ENCODE measurements at regions of chr20 and their contacts with region 1.

Region 1: GRCh38 chr20:44942264-44942973 is 17.8 kb downstream of the TOMM34 start:
- DNase-seq: no peak
- H3K4me3 ChIP-seq: no peak overlapping the region
- H3K27ac ChIP-seq: no peak overlapping the region
- H3K4me1 ChIP-seq: no peaks in the 10 kb centered on the region
- H3K27me3 ChIP-seq: no peaks in the 10 kb centered on the region
- CTCF ChIP-seq: no peak

Region 2: DNA sequence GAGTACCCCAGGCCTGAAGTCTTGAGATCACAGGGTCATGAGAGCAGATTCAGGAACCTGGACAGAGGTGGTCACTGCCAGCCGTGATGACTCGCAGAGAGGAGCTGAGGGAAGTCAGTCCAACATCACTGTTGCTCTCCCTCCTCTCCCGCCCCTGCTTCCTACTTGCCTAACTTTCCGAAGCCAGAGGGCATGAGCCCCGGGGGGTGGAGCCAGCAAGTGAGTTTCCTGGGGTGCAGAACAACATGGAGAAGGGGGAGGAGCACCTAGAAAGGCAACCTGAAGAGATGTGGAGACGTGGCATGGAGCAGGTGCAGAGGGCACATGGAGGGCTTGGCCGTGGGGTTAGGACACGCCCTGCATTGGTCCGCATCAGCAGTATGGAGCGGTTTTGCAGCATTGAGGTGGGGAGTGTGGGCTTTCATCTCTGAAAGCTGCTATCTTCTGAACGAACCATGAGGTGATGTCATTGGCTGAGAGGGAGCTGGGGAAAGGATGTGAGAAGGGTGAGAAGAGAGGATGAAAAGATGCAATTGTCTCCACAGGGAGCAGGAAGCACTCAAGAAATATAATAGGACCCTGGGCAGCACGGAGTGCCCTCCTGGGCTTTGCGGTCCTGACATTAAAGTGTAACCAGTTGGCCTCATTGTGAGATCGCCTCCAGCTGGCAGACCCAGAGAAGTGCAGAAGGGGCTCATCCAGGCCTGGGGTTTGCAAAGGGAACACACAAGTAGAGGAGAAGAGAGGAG is 670.3 kb before region 1 on chr20:
- CTCF ChIA-PET with region 1: no interaction called
- POLR2A ChIA-PET with region 1: interaction called, 12 read pairs
- intact Hi-C with region 1: no loop called
- DNase-seq: no peak
- H3K4me3 ChIP-seq: no peak overlapping the region
- H3K27ac ChIP-seq: no peak overlapping the region
- H3K4me1 ChIP-seq: no peaks in the 10 kb centered on the region
- H3K27me3 ChIP-seq: peaks cover 53% of the 10 kb centered on the region
- CTCF ChIP-seq: peak; percentile 34